ENCODE measurements at regions of chrX and their contacts with region 1.

Region 1: GRCh38 chrX:104156630-104157529 is at the start of gene SLC25A53:
- DNase-seq: peak; percentile 57 to 83 (median 78)
- H3K4me3 ChIP-seq: peak within 1 kb of the TSS; percentile 75
- H3K4me3 Mint-ChIP-seq: peak within 1 kb of the TSS; percentile 88 to 100 (median 97)
- H3K27ac ChIP-seq: peak within 1 kb of the TSS; percentile 95
- H3K27ac Mint-ChIP-seq: peak within 1 kb of the TSS; percentile 88 to 100 (median 100)
- H3K4me1 ChIP-seq: peaks cover 4% of the 10 kb centered on the region
- H3K4me1 Mint-ChIP-seq: peaks cover 14 to 28% (median 15%) of the 10 kb centered on the region in 3 donors
- H3K27me3 ChIP-seq: no peaks in the 10 kb centered on the region
- H3K27me3 Mint-ChIP-seq: peaks cover 0 to 9% of the 10 kb centered on the region in 2 donors
- total RNA-seq, gene SLC25A53: 6.8 to 8.5 TPM

Region 2: DNA sequence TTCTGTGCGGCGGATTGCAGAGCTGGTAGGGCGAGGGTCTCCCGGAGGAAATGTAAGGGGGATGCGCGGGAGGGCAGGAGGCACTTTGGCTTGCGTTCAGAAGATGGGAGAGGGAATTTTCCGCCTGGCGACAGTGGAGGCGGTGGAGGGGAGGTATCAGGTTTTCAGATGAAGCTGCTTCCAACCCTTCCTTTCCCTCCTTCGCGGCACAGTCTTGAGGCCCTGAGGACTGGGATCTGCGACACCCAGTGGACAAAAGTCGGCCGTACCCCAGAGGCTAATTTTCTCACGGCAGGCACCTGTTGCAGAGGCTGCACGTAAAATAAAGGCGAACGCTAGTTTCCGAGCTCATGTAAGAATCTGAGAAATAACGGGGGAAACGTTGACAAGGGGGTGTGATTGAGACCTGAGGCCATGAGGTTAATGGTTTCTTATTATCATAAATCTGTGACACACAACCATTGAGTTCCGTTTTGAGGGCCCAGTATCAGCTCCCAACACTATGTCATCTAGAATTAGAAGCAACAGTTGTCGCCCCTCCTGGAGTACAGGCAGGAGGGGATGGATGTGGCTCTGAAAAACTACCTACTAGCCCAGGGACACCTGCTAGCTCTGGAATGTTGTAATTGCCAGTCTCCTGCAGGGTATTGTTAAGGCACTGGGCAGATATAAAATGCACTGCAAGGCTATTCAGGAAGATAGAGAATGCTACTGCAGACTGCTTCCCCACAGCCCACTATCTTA is 43.5 kb before region 1 on chrX:
- CTCF ChIA-PET with region 1: interaction called, 3 read pairs
- POLR2A ChIA-PET with region 1: interaction called, 11 read pairs
- DNase-seq: peak; percentile 41 to 73 (median 45)
- H3K4me3 ChIP-seq: peak overlapping the region; percentile 62
- H3K4me3 Mint-ChIP-seq: peak overlapping the region; percentile 88 to 97 (median 93)
- H3K27ac ChIP-seq: peak overlapping the region; percentile 67
- H3K27ac Mint-ChIP-seq: peak overlapping the region; percentile 89 to 97 (median 94)
- H3K4me1 ChIP-seq: peaks cover 35% of the 10 kb centered on the region
- H3K4me1 Mint-ChIP-seq: peaks cover 38 to 59% (median 51%) of the 10 kb centered on the region in 3 donors
- H3K27me3 ChIP-seq: no peaks in the 10 kb centered on the region
- H3K27me3 Mint-ChIP-seq: peaks cover 0 to 12% of the 10 kb centered on the region in 2 donors